Tibial artery (tissue), 4 donors: ENCODE measurements at regions of chrX and their contacts with region 1.

Region 1: DNA sequence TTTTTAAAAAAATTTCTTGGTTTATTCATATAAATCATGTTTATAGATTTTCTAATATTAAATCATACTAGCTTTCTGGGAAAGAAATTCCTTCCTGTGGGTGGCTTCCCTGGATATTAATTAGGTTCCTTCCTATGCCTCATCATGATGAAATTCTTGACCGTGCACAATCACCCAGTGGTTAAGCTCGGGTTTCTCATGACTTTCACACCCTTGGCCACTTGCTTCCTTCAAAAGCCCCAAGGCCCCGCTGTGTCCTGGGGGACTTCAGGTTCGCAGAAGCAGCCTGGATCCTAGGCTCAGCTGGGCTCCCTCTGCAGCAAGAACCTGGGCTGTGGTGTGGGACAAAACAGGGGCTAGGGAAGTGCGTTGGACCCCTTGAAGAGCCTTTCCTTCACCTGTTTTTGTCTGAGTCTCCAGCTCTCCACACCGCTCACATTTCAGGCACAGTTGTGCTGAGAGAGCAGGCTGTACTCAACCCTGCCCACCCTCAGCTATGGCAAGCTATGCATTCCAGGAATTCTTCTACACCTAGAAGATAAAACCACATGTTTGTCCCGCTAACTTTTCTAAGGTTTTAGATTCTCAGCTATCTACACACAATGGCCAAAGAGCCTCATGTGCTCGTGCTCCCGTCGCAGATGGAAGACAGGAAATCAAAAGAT is 48.9 kb upstream of the TMSB15B start:
- DNase-seq: no peak
- H3K4me3 ChIP-seq: no peak overlapping the region
- H3K27ac ChIP-seq: no peak overlapping the region
- H3K4me1 ChIP-seq: no peaks in the 10 kb centered on the region
- H3K27me3 ChIP-seq: no peaks in the 10 kb centered on the region
- CTCF ChIP-seq: no peak

Region 2: DNA sequence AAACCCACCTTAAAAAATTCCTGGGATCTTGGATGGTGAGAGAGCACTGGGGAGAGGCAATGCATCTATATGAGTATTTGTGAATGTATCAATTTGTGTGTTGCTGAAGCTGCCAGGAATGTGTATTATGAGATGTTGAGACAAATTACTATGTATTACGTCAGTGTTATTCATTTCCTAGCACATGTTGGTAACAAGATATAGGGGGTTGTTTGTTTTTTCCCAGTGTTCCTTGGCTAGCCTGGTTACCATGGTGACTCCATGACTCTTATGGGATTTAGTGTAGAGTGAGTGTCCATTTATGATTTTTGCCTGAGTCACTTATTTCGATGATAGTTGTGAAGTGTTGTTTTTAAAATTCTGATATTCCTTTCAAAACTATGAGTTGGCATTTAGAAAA is 459.8 kb before region 1 on chrX:
- intact Hi-C with region 1: no loop called
- DNase-seq: no peak
- H3K4me3 ChIP-seq: no peak overlapping the region
- H3K27ac ChIP-seq: no peak overlapping the region
- H3K4me1 ChIP-seq: no peaks in the 10 kb centered on the region
- H3K27me3 ChIP-seq: no peaks in the 10 kb centered on the region
- CTCF ChIP-seq: no peak

Region 3: DNA sequence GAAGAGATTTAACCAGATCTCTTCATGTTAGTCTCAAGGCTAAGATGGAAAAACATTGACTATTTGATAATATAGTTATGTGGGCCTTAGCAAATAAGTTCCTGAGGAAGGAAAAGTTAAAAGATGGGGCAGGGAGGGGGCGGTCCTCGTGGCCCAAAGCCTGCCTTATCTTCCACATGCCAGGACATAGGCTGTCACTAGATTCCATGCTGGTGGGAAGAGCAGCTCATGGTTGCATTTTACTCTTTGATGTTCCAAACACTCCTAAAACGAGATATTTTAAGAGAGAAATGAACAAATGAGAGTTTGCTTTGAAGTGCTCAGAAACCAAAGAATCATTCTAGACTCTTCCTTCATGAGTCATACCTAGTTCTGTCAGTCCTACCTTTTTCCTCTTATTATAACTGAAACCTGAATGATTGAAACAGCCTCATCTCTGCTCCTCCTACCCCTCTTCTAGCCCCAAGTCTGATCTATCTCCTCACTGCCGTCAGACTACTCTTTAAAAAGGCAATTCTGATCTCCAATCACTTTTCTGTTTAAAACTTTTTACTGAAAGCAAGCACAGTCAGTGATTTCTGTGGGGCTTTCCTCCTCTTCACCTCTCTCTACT is 106.5 kb before region 1 on chrX:
- intact Hi-C with region 1: no loop called
- DNase-seq: no peak
- H3K4me3 ChIP-seq: no peak overlapping the region
- H3K27ac ChIP-seq: no peak overlapping the region
- H3K4me1 ChIP-seq: no peaks in the 10 kb centered on the region
- H3K27me3 ChIP-seq: no peaks in the 10 kb centered on the region
- CTCF ChIP-seq: no peak

Region 4: GRCh38 chrX:103849558-103849957 is 63.9 kb before region 1 on chrX:
- intact Hi-C with region 1: loop called (anchors 2 kb)
- DNase-seq: no peak
- H3K4me3 ChIP-seq: no peak overlapping the region
- H3K27ac ChIP-seq: no peak overlapping the region
- H3K4me1 ChIP-seq: peaks cover 0 to 9% (median 0%) of the 10 kb centered on the region in 4 donors
- H3K27me3 ChIP-seq: no peaks in the 10 kb centered on the region
- CTCF ChIP-seq: no peak